Aorta (tissue), 5 donors: ENCODE measurements at regions of chr22 and their contacts with region 1.

Region 1: DNA sequence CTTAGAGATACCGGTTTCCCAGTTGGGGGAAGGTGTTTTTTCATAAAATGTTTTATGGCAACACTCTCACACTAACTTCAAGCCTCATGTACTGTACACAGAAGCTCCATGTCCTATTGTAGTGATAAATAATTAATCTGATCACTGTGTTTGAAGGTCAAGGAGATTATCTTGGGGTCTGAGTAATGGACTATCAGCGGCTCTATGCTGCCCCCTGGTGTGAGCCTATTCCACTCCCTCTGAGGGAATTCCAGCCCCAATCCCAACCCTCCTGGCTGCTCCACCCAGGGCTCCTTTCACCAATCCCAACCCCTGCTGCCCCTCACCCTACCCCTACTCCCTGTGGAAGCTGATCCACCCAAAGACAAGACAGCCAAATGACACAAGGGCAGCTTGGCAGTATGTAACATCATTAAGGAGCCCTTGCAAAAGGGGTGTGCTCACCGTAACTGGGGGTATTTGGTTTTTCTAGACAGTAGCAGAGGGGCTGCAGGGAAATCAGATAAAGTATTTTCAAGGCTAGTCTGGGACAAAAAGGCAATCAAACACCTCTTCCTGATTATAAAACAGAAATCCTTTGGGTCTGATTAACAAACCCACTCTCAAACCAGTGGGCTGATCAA is 22.3 kb downstream of the HPS4 start:
- DNase-seq: peak; percentile 66 to 85
- ATAC-seq: peak; percentile 49
- H3K4me3 ChIP-seq: no peak overlapping the region
- H3K27ac ChIP-seq: no peak overlapping the region
- H3K4me1 ChIP-seq: no peaks in the 10 kb centered on the region
- H3K27me3 ChIP-seq: no peaks in the 10 kb centered on the region

Region 2: GRCh38 chr22:26364066-26365015 is 97.0 kb before region 1 on chr22:
- intact Hi-C with region 1: loop called in 1 of 2 experiments (anchors 2 kb)
- DNase-seq: peak in 1 of 2 donors; percentile 66
- ATAC-seq: peak; percentile 72
- H3K4me3 ChIP-seq: no peak overlapping the region
- H3K27ac ChIP-seq: no peak overlapping the region
- H3K4me1 ChIP-seq: no peaks in the 10 kb centered on the region
- H3K27me3 ChIP-seq: no peaks in the 10 kb centered on the region

Region 3: GRCh38 chr22:26529345-26529744 is 68.0 kb after region 1 on chr22:
- intact Hi-C with region 1: no loop called
- DNase-seq: no peak
- ATAC-seq: peak; percentile 34
- H3K4me3 ChIP-seq: no peak overlapping the region
- H3K27ac ChIP-seq: no peak overlapping the region
- H3K4me1 ChIP-seq: no peaks in the 10 kb centered on the region
- H3K27me3 ChIP-seq: no peaks in the 10 kb centered on the region